HCT116 (cell line): ENCODE measurements at regions of chr19 and their contacts with region 1.

Region 1: GRCh38 chr19:45478454-45479238 is 10.8 kb downstream of the FOSB start:
- DNase-seq: peak; percentile 95
- ATAC-seq: peak; percentile 95
- H3K4me3 ChIP-seq: peak overlapping the region; percentile 37 to 53
- H3K27ac ChIP-seq: peak overlapping the region; percentile 71
- H3K4me1 ChIP-seq: peaks cover 5 to 24% of the 10 kb centered on the region in 2 experiments; a peak in 3 of 4 replicates
- H3K27me3 ChIP-seq: no peaks in the 10 kb centered on the region
- CTCF ChIP-seq: peak; percentile 91 to 99 (median 98)
- POLR2A ChIP-seq: peak; percentile 80
- RAD21 ChIP-seq: peak; percentile 97

Region 2: DNA sequence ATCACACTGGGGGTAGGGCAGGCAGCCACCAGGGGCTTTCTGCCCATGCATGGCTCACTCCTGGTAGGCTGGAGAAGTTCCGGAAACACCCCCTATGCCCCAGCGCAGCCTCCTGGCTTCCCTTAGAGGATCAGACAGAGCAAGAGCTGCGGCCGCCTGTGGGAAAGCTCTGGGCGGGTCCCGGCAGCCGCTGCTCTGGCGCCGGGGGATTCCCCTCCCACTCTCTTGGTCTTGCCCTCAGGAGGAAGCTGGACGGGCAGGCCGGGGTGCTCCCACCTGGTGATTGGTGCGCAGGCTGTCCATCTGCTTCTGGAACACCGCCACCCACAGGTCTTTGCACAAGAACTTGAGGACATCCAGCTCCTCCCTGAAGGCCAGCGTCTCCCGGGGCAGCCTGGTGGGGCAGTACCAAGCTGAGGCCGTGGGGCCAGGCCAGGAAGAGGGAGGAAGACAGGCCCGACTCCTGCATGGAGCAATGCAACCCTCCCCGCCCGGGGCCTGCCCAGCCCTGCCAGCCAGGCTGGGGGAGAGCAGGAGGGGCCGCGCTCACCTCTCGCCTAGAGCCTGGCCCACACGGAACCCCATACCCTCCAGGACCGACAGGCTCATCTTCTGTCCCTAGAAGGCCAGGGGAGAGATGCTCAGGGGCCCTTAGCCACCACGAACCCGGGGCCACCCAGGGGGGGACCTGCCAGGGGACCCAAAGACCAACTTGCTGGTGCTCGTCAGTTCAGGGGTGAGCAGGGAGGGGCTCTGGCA is 313.9 kb before region 1 on chr19:
- CTCF ChIA-PET with region 1: no interaction called
- POLR2A ChIA-PET with region 1: no interaction called
- RAD21 ChIA-PET with region 1: interaction called in 1 of 2 experiments, 10 read pairs
- intact Hi-C with region 1: no loop called
- DNase-seq: peak; percentile 83
- ATAC-seq: peak; percentile 91
- H3K4me3 ChIP-seq: peak overlapping the region; percentile 20 to 33; a peak in 3 of 4 replicates
- H3K27ac ChIP-seq: no peak overlapping the region; the same call in 1 of the 2 replicates
- H3K4me1 ChIP-seq: peaks cover 22 to 42% of the 10 kb centered on the region in 2 experiments
- H3K27me3 ChIP-seq: no peaks in the 10 kb centered on the region
- CTCF ChIP-seq: peak in 2 of 3 experiments; percentile 15 to 20; a peak in 2 of 6 replicates
- POLR2A ChIP-seq: no peak
- RAD21 ChIP-seq: no peak

Region 3: DNA sequence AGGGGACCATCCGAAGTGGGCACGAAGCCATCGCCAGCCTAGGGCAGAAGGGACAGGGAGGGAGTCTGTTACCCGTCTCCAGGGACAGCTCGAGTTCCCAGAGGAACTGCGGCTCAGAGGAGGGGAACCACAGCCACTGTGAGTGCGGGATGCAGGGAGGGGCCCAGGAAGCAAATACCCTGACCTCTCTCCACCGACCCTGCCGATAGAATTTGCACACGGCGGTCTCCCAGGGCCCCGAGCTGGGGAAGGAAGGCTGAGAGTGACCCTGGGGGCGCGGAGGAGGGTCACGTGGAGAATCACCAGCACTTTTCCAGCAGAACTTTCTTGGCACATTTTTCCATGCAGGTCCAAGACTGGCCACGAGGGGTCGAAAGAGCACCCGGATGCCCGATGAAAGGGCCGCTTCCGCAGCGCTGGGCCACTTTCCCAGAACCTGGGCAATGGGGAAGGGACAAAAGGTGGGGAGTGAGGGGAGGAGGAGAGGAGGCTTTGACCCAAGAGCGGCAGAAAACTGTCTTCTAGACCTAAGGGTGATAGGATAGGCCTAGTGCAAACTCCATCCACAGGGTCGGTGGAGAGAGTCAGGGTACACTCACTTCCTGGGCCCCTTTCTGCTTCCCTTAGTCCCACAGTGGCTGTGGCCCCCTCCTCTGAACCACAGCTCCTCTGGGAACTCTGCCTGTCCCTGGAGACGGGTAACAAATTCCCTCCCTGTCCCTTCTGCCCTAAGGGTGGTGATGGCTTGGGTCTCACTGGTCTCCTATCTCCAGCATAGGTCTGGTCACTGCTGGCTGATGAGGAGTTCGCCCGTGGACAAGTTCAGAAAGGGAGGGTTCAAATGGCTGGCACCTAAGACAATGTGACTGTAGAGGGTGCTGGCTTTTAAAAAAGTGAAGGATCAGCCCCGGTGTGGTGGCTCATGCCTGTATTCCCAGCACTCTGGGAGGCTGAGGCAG is 128.7 kb after region 1 on chr19:
- CTCF ChIA-PET with region 1: no interaction called
- POLR2A ChIA-PET with region 1: no interaction called
- RAD21 ChIA-PET with region 1: no interaction called
- intact Hi-C with region 1: no loop called
- DNase-seq: no peak
- ATAC-seq: peak; percentile 80
- H3K4me3 ChIP-seq: peak overlapping the region in 1 of 2 experiments; percentile 17; a peak in 1 of 4 replicates
- H3K27ac ChIP-seq: peak overlapping the region; percentile 72
- H3K4me1 ChIP-seq: peaks cover 12 to 13% of the 10 kb centered on the region in 2 experiments
- H3K27me3 ChIP-seq: no peaks in the 10 kb centered on the region
- CTCF ChIP-seq: peak; percentile 78 to 93 (median 82)
- POLR2A ChIP-seq: no peak
- RAD21 ChIP-seq: peak; percentile 84

Region 4: GRCh38 chr19:45717983-45718650 is 239.5 kb after region 1 on chr19:
- CTCF ChIA-PET with region 1: no interaction called
- POLR2A ChIA-PET with region 1: no interaction called
- RAD21 ChIA-PET with region 1: no interaction called
- intact Hi-C with region 1: no loop called
- DNase-seq: no peak
- ATAC-seq: no peak
- H3K4me3 ChIP-seq: peak overlapping the region; percentile 52 to 64
- H3K27ac ChIP-seq: peak overlapping the region; percentile 58
- H3K4me1 ChIP-seq: peaks cover 44 to 58% of the 10 kb centered on the region in 2 experiments
- H3K27me3 ChIP-seq: no peaks in the 10 kb centered on the region
- CTCF ChIP-seq: no peak
- POLR2A ChIP-seq: no peak
- RAD21 ChIP-seq: peak; percentile 3; the same call in 1 of the 2 replicates

Region 5: DNA sequence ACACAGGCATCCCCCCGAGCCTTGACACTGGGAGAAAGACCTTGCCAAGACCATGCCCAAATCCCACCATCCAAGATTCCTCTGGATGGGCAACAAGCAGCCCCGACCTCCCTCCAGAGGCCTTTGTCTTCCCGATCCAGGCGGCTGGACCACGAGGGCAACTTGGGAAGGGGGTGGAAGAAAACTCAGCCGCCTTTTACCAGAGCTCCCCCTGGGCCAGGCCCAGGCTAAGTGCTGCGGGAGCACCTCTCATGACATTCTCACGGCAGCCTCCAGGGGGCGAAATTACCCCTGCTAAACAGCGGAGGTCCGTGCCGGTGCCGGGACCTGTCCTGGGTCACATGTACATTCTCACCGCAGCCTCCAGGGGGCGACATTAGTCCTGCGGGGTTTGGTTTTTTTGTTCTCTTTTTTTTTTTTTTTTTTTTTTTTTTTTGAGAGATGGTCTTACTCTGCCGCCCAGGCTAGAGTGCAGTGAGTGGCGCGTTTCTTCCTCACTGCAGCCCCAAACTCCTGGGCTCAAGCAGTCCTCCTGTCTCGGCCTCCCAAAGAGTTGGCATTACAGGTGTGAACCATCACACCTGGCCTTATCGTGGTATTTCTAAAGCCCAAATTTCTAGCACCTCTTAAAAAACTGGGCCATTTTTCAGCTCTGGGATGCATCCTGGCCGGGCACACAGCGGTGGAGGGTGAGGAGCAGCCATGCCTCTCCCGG is 338.5 kb after region 1 on chr19:
- CTCF ChIA-PET with region 1: no interaction called
- POLR2A ChIA-PET with region 1: no interaction called
- RAD21 ChIA-PET with region 1: no interaction called
- intact Hi-C with region 1: no loop called
- DNase-seq: peak; percentile 90
- ATAC-seq: peak; percentile 93
- H3K4me3 ChIP-seq: no peak overlapping the region
- H3K27ac ChIP-seq: peak overlapping the region; percentile 50; the same call in 1 of the 2 replicates
- H3K4me1 ChIP-seq: peaks cover 3 to 11% of the 10 kb centered on the region in 2 experiments; a peak in 3 of 4 replicates
- H3K27me3 ChIP-seq: no peaks in the 10 kb centered on the region
- CTCF ChIP-seq: peak; percentile 99
- POLR2A ChIP-seq: no peak
- RAD21 ChIP-seq: peak; percentile 87